ENCODE measurements at regions of chr12 and their contacts with region 1.

Region 1: GRCh38 chr12:57069523-57069922 is 9.1 kb downstream of the NEMP1 start:
- ATAC-seq: peak; percentile 95 to 100 (median 98)
- H3K4me3 ChIP-seq: no peak overlapping the region
- H3K27ac ChIP-seq: no peak overlapping the region
- H3K4me1 ChIP-seq: peaks cover 0 to 2% of the 10 kb centered on the region in 2 donors

Region 2: DNA sequence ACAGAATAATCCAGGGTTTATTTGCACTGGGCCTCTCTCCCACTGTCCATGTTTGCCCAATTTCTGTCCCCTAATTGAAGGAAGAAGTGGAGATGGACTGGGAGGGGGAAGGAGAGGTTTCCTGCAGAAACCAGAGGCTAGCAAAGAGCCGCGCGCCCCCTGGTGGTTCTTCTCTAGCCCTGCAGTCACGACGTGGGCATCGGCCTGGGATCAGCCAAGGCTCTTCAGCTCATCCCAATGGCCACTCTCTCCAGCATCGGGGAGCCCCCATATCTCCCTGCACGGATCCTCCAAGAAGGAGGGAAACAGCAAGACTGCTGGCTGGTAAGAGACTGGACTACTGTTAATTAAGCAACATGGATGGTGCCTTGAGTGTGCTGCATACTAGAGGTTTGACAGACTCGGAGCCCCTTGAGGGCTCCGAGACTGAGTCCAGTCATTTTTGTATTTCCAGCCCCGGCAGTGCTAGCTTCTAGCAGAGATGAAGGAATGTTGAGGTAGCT is 81.9 kb before region 1 on chr12:
- in situ Hi-C with region 1: no loop called
- ATAC-seq: peak; percentile 82 to 97 (median 88)
- H3K4me3 ChIP-seq: no peak overlapping the region
- H3K27ac ChIP-seq: no peak overlapping the region
- H3K4me1 ChIP-seq: no peaks in the 10 kb centered on the region

Region 3: GRCh38 chr12:57005980-57006808 is 63.3 kb before region 1 on chr12 and contains the start of gene ZBTB39:
- in situ Hi-C with region 1: loop called in 2 of 9 experiments (anchors 10 kb)
- ATAC-seq: peak; percentile 82 to 94 (median 88)
- H3K4me3 ChIP-seq: peak within 1 kb of the TSS; percentile 62 to 96 (median 95)
- H3K27ac ChIP-seq: peak within 1 kb of the TSS; percentile 26 to 78
- H3K4me1 ChIP-seq: peaks cover 7 to 15% of the 10 kb centered on the region in 2 donors
- total RNA-seq, gene ZBTB39: 4.4 to 17.8 (median 9.3) TPM

Region 4: GRCh38 chr12:57012600-57013465 is 56.7 kb before region 1 on chr12:
- in situ Hi-C with region 1: loop called in 2 of 9 experiments (anchors 10 kb)
- ATAC-seq: no peak
- H3K4me3 ChIP-seq: no peak overlapping the region
- H3K27ac ChIP-seq: no peak overlapping the region
- H3K4me1 ChIP-seq: peaks cover 0 to 9% of the 10 kb centered on the region in 2 donors

Region 5: DNA sequence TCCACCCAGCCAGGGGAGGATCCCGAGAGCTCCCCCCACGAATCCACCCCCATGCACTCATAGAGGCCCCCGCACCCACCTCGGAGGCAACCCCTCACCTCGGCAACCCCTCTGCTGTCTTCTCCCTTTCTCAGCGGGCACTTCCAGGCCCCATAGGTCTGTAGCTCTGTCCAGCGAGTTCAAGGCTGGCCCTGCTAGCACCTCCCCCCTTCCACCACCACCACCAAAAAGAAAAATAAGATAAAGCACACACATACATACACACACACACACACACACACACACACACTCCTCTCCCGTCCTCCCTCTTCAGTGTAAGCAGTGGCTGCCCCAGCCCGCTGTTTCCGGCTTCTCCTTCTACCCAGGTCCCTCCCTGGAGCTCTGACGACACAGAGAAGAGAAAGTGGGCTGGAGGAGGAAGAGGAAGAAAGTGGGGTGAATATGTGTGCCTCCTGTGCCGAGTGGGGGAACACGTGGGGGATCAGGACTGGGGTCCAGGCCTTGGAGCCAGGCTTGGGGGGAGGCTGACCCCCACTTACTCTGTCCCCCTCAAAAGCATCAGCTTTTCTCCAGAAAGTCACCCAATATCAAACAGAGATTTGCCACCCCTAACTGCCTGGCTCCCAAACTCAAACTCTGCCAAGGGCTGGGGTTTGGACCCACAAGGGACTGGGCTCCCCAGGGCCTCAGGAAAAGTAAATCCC is 41.7 kb after region 1 on chr12 and contains the start of gene STAT6:
- in situ Hi-C with region 1: loop called in 1 of 9 experiments (anchors 5 kb)
- ATAC-seq: peak; percentile 38 to 66 (median 48)
- H3K4me3 ChIP-seq: peak within 1 kb of the TSS; percentile 5 to 31 (median 20)
- H3K27ac ChIP-seq: peak within 1 kb of the TSS; percentile 66 to 88
- H3K4me1 ChIP-seq: peaks cover 21 to 25% of the 10 kb centered on the region in 2 donors
- total RNA-seq, gene STAT6: 1.6 to 126 (median 13.3) TPM

Region 6: GRCh38 chr12:57462251-57462911 is 392.9 kb after region 1 on chr12:
- in situ Hi-C with region 1: no loop called
- ATAC-seq: peak; percentile 53 to 70 (median 66)
- H3K4me3 ChIP-seq: peak overlapping the region; percentile 32 to 59 (median 51)
- H3K27ac ChIP-seq: peak overlapping the region in 1 of 2 donors; percentile 71
- H3K4me1 ChIP-seq: peaks cover 23 to 26% of the 10 kb centered on the region in 2 donors